ENCODE measurements at regions of chr14 and their contacts with region 1.

Region 1: GRCh38 chr14:44339231-44339630 is 167.9 kb downstream of the FSCB start:
- DNase-seq: peak; percentile 89
- ATAC-seq: peak; percentile 97
- H3K4me3 ChIP-seq: no peak overlapping the region
- H3K27ac ChIP-seq: peak overlapping the region; percentile 86
- H3K4me1 ChIP-seq: peaks cover 21% of the 10 kb centered on the region
- H3K27me3 ChIP-seq: no peaks in the 10 kb centered on the region
- CTCF ChIP-seq: no peak

Region 2: GRCh38 chr14:44165286-44165685 is 173.9 kb before region 1 on chr14:
- CTCF ChIA-PET with region 1: no interaction called
- POLR2A ChIA-PET with region 1: no interaction called
- intact Hi-C with region 1: no loop called
- DNase-seq: no peak
- ATAC-seq: no peak
- H3K4me3 ChIP-seq: no peak overlapping the region
- H3K27ac ChIP-seq: no peak overlapping the region
- H3K4me1 ChIP-seq: no peaks in the 10 kb centered on the region
- H3K27me3 ChIP-seq: no peaks in the 10 kb centered on the region
- CTCF ChIP-seq: no peak

Region 3: GRCh38 chr14:44316647-44317433 is 22.4 kb before region 1 on chr14:
- CTCF ChIA-PET with region 1: no interaction called
- POLR2A ChIA-PET with region 1: no interaction called
- intact Hi-C with region 1: loop called (anchors 1 kb)
- DNase-seq: peak; percentile 98
- ATAC-seq: peak; percentile 100
- H3K4me3 ChIP-seq: no peak overlapping the region; the same call in 1 of the 2 replicates
- H3K27ac ChIP-seq: peak overlapping the region; percentile 91
- H3K4me1 ChIP-seq: peaks cover 5% of the 10 kb centered on the region
- H3K27me3 ChIP-seq: no peaks in the 10 kb centered on the region
- CTCF ChIP-seq: no peak

Region 4: DNA sequence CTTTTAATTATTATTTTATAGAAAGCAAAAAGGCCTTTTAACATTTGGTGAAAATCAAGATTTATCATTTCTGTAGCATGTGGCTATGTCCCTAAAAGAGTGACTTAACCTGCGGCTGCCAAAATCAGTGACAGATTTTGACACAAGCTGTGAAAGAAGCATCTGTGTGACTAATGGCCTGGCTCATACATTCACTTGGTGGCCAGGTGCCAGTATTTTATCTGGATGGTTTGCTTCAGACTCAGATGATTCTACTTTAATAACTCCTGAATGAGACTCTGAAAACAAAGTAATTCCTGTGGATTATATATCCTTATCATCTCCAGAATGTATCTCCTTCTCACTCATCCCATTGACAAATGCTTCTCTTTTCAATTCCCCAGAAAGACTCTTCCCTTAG is 64.8 kb after region 1 on chr14:
- CTCF ChIA-PET with region 1: no interaction called
- POLR2A ChIA-PET with region 1: no interaction called
- intact Hi-C with region 1: loop called (anchors 2 kb)
- DNase-seq: peak; percentile 87
- ATAC-seq: peak; percentile 95
- H3K4me3 ChIP-seq: no peak overlapping the region
- H3K27ac ChIP-seq: no peak overlapping the region
- H3K4me1 ChIP-seq: peaks cover 8% of the 10 kb centered on the region
- H3K27me3 ChIP-seq: no peaks in the 10 kb centered on the region
- CTCF ChIP-seq: no peak

Region 5: DNA sequence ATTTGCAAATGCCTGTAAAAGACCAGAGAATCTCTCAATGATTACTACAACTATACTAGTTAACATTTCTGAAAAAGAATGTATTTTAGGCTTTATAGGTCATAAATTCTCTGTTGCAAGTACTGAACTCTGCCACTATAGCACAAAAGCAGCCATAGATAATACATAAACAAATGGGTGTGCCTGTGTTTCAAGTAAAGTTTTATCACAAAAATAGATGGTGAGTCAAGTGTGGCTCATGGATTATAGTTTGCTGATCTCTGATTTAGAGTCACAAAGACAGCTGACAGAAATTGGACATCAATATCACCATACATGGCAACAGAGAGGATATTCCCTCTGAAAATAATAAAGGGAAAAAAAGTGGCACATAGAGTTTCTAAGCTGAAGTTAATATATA is 99.7 kb after region 1 on chr14:
- CTCF ChIA-PET with region 1: no interaction called
- POLR2A ChIA-PET with region 1: no interaction called
- intact Hi-C with region 1: loop called (anchors 2 kb)
- DNase-seq: peak; percentile 66
- ATAC-seq: peak; percentile 95
- H3K4me3 ChIP-seq: no peak overlapping the region
- H3K27ac ChIP-seq: 0 out of 2 replicates have a peak overlapping the region, but pooled peaks have one; percentile 38
- H3K4me1 ChIP-seq: peaks cover 8% of the 10 kb centered on the region
- H3K27me3 ChIP-seq: no peaks in the 10 kb centered on the region
- CTCF ChIP-seq: no peak

Measured in PC-3 (cell line).